ENCODE measurements at regions of chr21 and their contacts with region 1.

Region 1: GRCh38 chr21:33479679-33480480 is at the start of gene TMEM50B:
- DNase-seq: peak; percentile 88 to 98
- ATAC-seq: peak; percentile 87 to 96 (median 88)
- H3K4me3 ChIP-seq: peak within 1 kb of the TSS; percentile 93
- H3K4me3 Mint-ChIP-seq: peak within 1 kb of the TSS; percentile 94
- H3K27ac ChIP-seq: peak within 1 kb of the TSS; percentile 83
- H3K27ac Mint-ChIP-seq: peak within 1 kb of the TSS; percentile 83 to 85
- H3K4me1 ChIP-seq: peaks cover 17% of the 10 kb centered on the region
- H3K4me1 Mint-ChIP-seq: peaks cover 8 to 15% of the 10 kb centered on the region in 2 donors
- H3K27me3 ChIP-seq: no peaks in the 10 kb centered on the region
- H3K27me3 Mint-ChIP-seq: no peaks in the 10 kb centered on the region
- CTCF ChIP-seq: peak; percentile 31
- total RNA-seq, gene TMEM50B: 34.5 to 42.1 (median 40.5) TPM

Region 2: DNA sequence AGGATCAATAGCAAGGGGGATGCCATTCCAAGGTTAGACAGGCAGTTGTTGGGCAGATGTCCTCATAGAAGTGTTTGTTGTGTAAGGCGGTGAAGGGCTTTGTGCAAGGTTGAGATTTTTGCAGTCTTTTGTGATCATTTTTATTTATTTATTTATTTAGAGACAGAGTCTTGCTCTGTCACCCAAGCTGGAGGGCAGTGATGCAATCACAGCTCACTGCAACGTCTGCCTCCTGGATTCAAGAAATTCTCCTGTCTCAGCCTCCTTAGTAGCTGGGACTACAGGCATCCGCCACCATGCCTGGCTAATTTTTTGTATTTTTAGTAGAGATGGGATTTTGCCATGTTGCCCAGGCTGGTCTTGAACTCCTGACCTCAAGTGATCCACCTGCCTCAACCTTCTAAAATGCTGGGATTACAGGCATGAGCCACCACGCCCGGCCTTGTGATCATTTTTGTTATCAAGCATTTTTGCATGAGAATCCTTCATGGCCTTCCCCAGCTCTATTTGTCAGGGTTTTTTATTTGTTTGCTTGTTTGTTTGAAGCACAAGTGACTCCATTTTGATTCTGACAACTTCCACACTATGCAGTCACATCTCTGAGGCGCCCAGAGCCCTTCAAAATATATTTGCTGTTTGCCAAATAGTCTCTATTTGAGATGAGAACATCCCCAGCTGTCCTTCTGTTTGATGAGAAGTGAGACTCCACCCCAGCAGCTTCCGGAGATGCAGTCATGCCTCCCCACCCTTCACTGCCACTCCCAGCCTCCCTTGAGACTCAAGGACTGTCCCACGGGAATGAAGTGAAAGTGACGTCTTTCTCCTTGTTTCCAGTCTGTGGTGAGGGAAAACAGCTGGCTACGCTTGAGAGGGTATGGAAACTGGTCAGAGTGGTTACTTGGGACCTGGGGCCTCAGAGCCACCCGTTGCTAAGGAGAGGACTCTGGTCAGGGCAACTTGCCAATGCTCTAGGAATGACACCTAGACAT is 38.1 kb before region 1 on chr21:
- intact Hi-C with region 1: no loop called
- DNase-seq: no peak
- ATAC-seq: no peak
- H3K4me3 ChIP-seq: no peak overlapping the region
- H3K4me3 Mint-ChIP-seq: no peak overlapping the region
- H3K27ac ChIP-seq: peak overlapping the region; percentile 61
- H3K27ac Mint-ChIP-seq: no peak overlapping the region
- H3K4me1 ChIP-seq: peaks cover 10% of the 10 kb centered on the region
- H3K4me1 Mint-ChIP-seq: no peaks in the 10 kb centered on the region
- H3K27me3 ChIP-seq: no peaks in the 10 kb centered on the region
- H3K27me3 Mint-ChIP-seq: no peaks in the 10 kb centered on the region
- CTCF ChIP-seq: no peak

Region 3: GRCh38 chr21:33491373-33492102 is 11.7 kb after region 1 on chr21 and contains the start of gene DNAJC28:
- intact Hi-C with region 1: loop called (anchors 1 kb)
- DNase-seq: peak; percentile 94 to 97
- ATAC-seq: peak; percentile 98
- H3K4me3 ChIP-seq: peak within 1 kb of the TSS; percentile 78
- H3K4me3 Mint-ChIP-seq: peak within 1 kb of the TSS; percentile 89
- H3K27ac ChIP-seq: peak within 1 kb of the TSS; percentile 34
- H3K27ac Mint-ChIP-seq: peak within 1 kb of the TSS; percentile 82 to 86
- H3K4me1 ChIP-seq: peaks cover 8% of the 10 kb centered on the region
- H3K4me1 Mint-ChIP-seq: peaks cover 14% of the 10 kb centered on the region in 2 donors
- H3K27me3 ChIP-seq: no peaks in the 10 kb centered on the region
- H3K27me3 Mint-ChIP-seq: peaks cover 7 to 10% of the 10 kb centered on the region in 2 donors
- CTCF ChIP-seq: no peak
- total RNA-seq, gene DNAJC28: 0.41 to 0.63 TPM in 2 of 3 donors, not detected in the other

Region 4: GRCh38 chr21:33588485-33589335 is 108.8 kb after region 1 on chr21 and contains the start of gene DONSON:
- intact Hi-C with region 1: loop called (anchors 5 kb)
- DNase-seq: peak; percentile 92 to 93
- ATAC-seq: peak; percentile 94 to 98 (median 95)
- H3K4me3 ChIP-seq: peak within 1 kb of the TSS; percentile 76
- H3K4me3 Mint-ChIP-seq: peak within 1 kb of the TSS; percentile 92
- H3K27ac ChIP-seq: peak within 1 kb of the TSS; percentile 64
- H3K27ac Mint-ChIP-seq: peak within 1 kb of the TSS; percentile 75 to 87
- H3K4me1 ChIP-seq: peaks cover 10% of the 10 kb centered on the region
- H3K4me1 Mint-ChIP-seq: peaks cover 15 to 17% of the 10 kb centered on the region in 2 donors
- H3K27me3 ChIP-seq: no peaks in the 10 kb centered on the region
- H3K27me3 Mint-ChIP-seq: no peaks in the 10 kb centered on the region
- CTCF ChIP-seq: peak; percentile 22
- total RNA-seq, gene DONSON: 17.0 to 18.3 (median 17.3) TPM

Region 5: DNA sequence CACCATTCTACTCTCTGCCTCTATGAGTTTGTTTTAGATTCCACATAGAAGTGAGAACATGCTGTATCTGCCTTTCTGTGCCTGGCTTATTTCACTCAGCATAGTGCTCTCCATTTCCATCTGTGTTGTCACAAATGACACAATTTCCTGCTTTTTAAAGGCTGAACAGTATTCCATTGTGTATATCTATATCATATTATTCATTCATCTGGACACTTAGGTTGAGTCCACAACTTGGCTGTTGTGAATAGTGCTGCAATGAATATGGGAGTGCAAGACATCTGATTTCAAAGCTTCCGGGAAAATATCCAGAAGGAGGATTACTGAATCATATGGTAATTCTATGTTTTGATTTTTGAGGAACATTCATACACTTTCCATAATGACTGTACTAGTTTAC is 128.7 kb after region 1 on chr21:
- intact Hi-C with region 1: loop called (anchors 1 kb)
- DNase-seq: no peak
- ATAC-seq: no peak
- H3K4me3 ChIP-seq: no peak overlapping the region
- H3K4me3 Mint-ChIP-seq: no peak overlapping the region
- H3K27ac ChIP-seq: no peak overlapping the region
- H3K27ac Mint-ChIP-seq: no peak overlapping the region
- H3K4me1 ChIP-seq: no peaks in the 10 kb centered on the region
- H3K4me1 Mint-ChIP-seq: peaks cover 0 to 5% of the 10 kb centered on the region in 2 donors
- H3K27me3 ChIP-seq: no peaks in the 10 kb centered on the region
- H3K27me3 Mint-ChIP-seq: no peaks in the 10 kb centered on the region
- CTCF ChIP-seq: no peak

Measured in natural killer cell (primary cell).